Right ventricle myocardium superior (tissue), 1 donor: ENCODE measurements at regions of chrX and their contacts with region 1.

Region 1: GRCh38 chrX:22135994-22136684 is 104.0 kb downstream of the PHEX start:
- DNase-seq: no peak
- ATAC-seq: peak; percentile 69

Region 2: GRCh38 chrX:22192417-22193060 is 56.4 kb after region 1 on chrX:
- intact Hi-C with region 1: loop called (anchors 10 kb)
- DNase-seq: peak; percentile 67
- ATAC-seq: peak; percentile 81